ENCODE measurements at regions of chr11 and their contacts with region 1.

Region 1: GRCh38 chr11:112453601-112454577 is 193.2 kb upstream of the PLET1 start:
- DNase-seq: peak; percentile 54 to 85 (median 68)
- H3K4me3 ChIP-seq: no peak overlapping the region
- H3K27ac ChIP-seq: no peak overlapping the region
- H3K4me1 ChIP-seq: no peaks in the 10 kb centered on the region
- H3K27me3 ChIP-seq: no peaks in the 10 kb centered on the region
- CTCF ChIP-seq: peak; percentile 28 to 65 (median 50)
- POLR2A ChIP-seq: no peak

Region 2: GRCh38 chr11:112289588-112290492 is 164.0 kb before region 1 on chr11:
- intact Hi-C with region 1: loop called in 1 of 2 experiments (anchors 5 kb)
- DNase-seq: peak; percentile 72 to 86 (median 83)
- H3K4me3 ChIP-seq: peak overlapping the region in 2 of 4 donors; percentile 39 to 93
- H3K27ac ChIP-seq: peak overlapping the region in 2 of 5 donors; percentile 43 to 56
- H3K4me1 ChIP-seq: peaks cover 7 to 40% of the 10 kb centered on the region in 2 donors
- H3K27me3 ChIP-seq: no peaks in the 10 kb centered on the region
- CTCF ChIP-seq: peak; percentile 50 to 95 (median 80)
- POLR2A ChIP-seq: peak in 1 of 2 donors; percentile 24

Region 3: DNA sequence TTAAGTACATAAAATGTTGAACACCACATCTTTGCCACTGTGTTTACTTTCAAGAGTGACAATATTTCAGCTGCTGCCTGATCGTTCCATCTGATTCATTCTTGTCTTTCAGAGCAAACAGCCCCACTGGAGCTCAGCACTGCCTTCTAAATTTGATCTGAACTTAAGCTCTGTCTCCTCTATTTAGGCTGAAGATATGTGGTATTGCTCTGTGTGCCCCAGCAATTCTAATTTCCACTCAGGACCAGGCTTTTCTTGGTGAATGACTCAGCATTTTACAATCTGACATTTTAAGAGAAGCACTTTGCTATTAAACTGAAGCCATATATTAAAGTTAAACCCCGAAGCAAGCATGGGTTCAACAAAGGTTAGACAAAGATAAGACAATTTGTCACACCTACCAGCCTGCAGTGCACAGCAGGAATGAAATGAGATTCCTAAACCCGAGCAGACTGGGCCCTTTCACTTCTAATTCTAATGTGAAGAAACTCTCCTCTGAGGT is 151.6 kb before region 1 on chr11:
- intact Hi-C with region 1: loop called (anchors 5 to 10 kb)
- DNase-seq: no peak
- H3K4me3 ChIP-seq: no peak overlapping the region
- H3K27ac ChIP-seq: peak overlapping the region in 3 of 5 donors; percentile 47 to 57 (median 50)
- H3K4me1 ChIP-seq: peaks cover 8 to 13% of the 10 kb centered on the region in 2 donors
- H3K27me3 ChIP-seq: no peaks in the 10 kb centered on the region
- CTCF ChIP-seq: no peak
- POLR2A ChIP-seq: no peak

Region 4: DNA sequence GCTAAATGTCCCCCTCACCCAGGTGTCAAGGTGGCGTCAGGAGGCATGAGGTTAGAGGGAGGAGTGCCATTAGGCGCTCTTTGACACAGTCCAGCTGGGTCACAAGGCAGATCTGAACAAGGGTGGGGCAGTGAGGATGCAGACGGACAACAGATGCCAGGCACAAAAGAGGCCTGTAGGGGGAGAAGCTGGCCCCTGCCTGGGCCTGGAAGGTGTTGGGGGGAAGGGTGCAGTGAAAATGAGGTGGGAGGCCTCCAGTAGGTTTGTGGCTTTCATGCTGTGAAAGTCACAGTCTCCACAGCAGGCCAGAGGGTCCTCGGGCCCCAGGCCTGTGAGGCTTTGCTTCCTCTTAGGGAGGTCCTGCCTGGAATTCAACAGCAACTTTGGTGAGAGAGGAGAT is 108.2 kb before region 1 on chr11:
- intact Hi-C with region 1: no loop called
- DNase-seq: no peak
- H3K4me3 ChIP-seq: no peak overlapping the region
- H3K27ac ChIP-seq: no peak overlapping the region
- H3K4me1 ChIP-seq: no peaks in the 10 kb centered on the region
- H3K27me3 ChIP-seq: no peaks in the 10 kb centered on the region
- CTCF ChIP-seq: no peak
- POLR2A ChIP-seq: no peak

Region 5: DNA sequence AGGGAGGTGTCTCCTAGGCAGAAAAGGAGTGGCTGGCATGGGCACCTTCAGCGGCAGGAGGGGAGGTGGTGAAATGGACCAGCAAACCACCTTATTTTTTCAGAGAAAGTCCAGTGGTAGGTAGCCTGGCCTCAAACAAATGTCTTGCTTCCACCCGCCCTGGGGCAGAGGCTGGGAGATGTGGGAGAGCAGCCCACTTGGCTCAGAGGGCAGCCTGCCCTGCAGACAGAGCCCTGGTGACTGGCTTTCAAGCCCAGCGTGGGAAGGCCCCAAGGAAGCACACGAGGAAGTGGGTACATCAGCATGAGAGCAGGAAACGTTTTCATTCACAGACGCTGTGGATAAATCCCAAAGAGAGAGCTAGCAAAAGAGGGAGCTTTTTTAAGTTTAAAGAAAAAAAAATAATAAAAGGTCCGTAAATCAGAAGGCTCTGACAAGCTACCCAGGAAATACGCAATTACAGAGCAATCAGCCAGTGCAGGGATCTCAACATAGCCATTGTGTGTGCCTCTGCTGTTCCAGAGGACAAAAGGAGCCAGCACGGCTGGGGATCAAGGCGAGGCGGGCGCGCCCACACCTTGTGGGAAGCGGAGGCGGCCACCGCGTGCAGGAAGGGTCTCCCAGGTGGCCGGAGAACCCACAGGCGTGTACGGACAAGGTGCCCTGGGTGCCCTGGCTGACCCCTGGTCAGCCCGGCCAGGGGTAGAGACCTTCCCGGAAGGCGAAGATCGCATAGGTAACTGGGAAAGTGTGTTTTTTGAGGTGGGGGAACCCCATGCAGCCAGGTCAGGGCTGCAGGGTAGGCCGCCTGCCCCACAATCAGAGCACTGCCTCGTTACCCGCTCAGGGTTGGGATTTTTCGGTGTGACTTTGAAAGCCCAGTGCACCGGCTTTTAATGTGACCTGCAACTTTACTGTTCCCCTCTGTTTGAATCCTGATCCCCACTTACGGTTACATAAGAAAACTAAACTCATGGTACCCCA is 45.6 kb after region 1 on chr11:
- intact Hi-C with region 1: no loop called
- DNase-seq: no peak
- H3K4me3 ChIP-seq: no peak overlapping the region
- H3K27ac ChIP-seq: no peak overlapping the region
- H3K4me1 ChIP-seq: no peaks in the 10 kb centered on the region
- H3K27me3 ChIP-seq: no peaks in the 10 kb centered on the region
- CTCF ChIP-seq: no peak
- POLR2A ChIP-seq: no peak

Region 6: GRCh38 chr11:112514011-112514740 is 60.3 kb after region 1 on chr11:
- intact Hi-C with region 1: no loop called
- DNase-seq: peak in 1 of 7 donors; percentile 58
- H3K4me3 ChIP-seq: no peak overlapping the region
- H3K27ac ChIP-seq: no peak overlapping the region
- H3K4me1 ChIP-seq: no peaks in the 10 kb centered on the region
- H3K27me3 ChIP-seq: no peaks in the 10 kb centered on the region
- CTCF ChIP-seq: no peak
- POLR2A ChIP-seq: no peak